GM12878 (cell line): ENCODE measurements at regions of chr11 and their contacts with region 1.

Region 1: DNA sequence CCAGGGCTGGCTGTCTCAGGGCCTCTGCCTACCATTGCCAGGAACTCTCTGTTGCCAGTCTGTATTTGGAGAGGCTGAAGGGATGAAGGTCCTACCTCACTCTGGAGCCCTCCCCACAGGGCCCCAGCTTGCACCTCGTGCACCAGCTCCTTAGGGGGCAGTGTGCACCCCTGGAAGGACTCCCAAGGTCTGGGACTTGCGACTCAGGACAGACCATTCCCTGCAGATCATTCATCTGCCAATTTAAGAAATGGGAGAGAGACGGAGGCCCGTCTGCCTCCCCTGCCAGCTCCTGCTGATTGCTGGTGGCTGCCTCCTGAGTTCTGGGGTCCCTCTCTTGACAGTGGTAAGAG is 27.5 kb upstream of the MALAT1 start:
- DNase-seq: no peak
- ATAC-seq: peak; percentile 65
- H3K4me3 ChIP-seq: 0 out of 2 replicates have a peak overlapping the region, but pooled peaks have one; percentile 31
- H3K27ac ChIP-seq: peak overlapping the region; percentile 76
- H3K4me1 ChIP-seq: peaks cover 28% of the 10 kb centered on the region
- H3K27me3 ChIP-seq: no peaks in the 10 kb centered on the region
- CTCF ChIP-seq: peak; percentile 67 to 76 (median 75)
- EP300 ChIP-seq: no peak
- POLR2A ChIP-seq: no peak
- RAD21 ChIP-seq: peak; percentile 65

Region 2: GRCh38 chr11:65366340-65366773 is 105.0 kb before region 1 on chr11:
- CTCF ChIA-PET with region 1: interaction called, 17 read pairs
- POLR2A ChIA-PET with region 1: no interaction called
- RAD21 ChIA-PET with region 1: interaction called, 5 read pairs
- SMC1A ChIA-PET with region 1: interaction called, 8 read pairs
- in situ Hi-C with region 1: no loop called
- intact Hi-C with region 1: no loop called
- DNase-seq: no peak
- ATAC-seq: peak; percentile 42
- H3K4me3 ChIP-seq: no peak overlapping the region
- H3K27ac ChIP-seq: no peak overlapping the region
- H3K4me1 ChIP-seq: peaks cover 16% of the 10 kb centered on the region
- H3K27me3 ChIP-seq: no peaks in the 10 kb centered on the region; a peak in 1 of 4 replicates
- CTCF ChIP-seq: peak; percentile 74 to 79 (median 76)
- EP300 ChIP-seq: no peak
- POLR2A ChIP-seq: no peak
- RAD21 ChIP-seq: peak; percentile 94

Region 3: GRCh38 chr11:65440831-65441499 is 30.4 kb before region 1 on chr11:
- CTCF ChIA-PET with region 1: interaction called, 13 read pairs
- POLR2A ChIA-PET with region 1: interaction called, 7 read pairs
- RAD21 ChIA-PET with region 1: interaction called, 6 read pairs
- SMC1A ChIA-PET with region 1: interaction called, 8 read pairs
- in situ Hi-C with region 1: no loop called
- intact Hi-C with region 1: no loop called
- DNase-seq: peak; percentile 98
- ATAC-seq: peak; percentile 69
- H3K4me3 ChIP-seq: no peak overlapping the region
- H3K27ac ChIP-seq: peak overlapping the region; percentile 89
- H3K4me1 ChIP-seq: peaks cover 52% of the 10 kb centered on the region
- H3K27me3 ChIP-seq: no peaks in the 10 kb centered on the region
- CTCF ChIP-seq: no peak
- EP300 ChIP-seq: peak; percentile 81 to 84; a peak in 3 of 4 replicates
- POLR2A ChIP-seq: peak; percentile 47; the same call in 1 of the 2 replicates
- RAD21 ChIP-seq: no peak

Region 4: GRCh38 chr11:65487413-65488272 is 16.3 kb after region 1 on chr11:
- CTCF ChIA-PET with region 1: interaction called, 728 read pairs
- POLR2A ChIA-PET with region 1: interaction called, 429 read pairs
- RAD21 ChIA-PET with region 1: interaction called, 208 read pairs
- SMC1A ChIA-PET with region 1: interaction called, 123 read pairs
- in situ Hi-C with region 1: no loop called
- intact Hi-C with region 1: no loop called
- DNase-seq: no peak
- ATAC-seq: peak; percentile 79
- H3K4me3 ChIP-seq: peak overlapping the region; percentile 15; the same call in 1 of the 2 replicates
- H3K27ac ChIP-seq: peak overlapping the region; percentile 62
- H3K4me1 ChIP-seq: peaks cover 61% of the 10 kb centered on the region
- H3K27me3 ChIP-seq: no peaks in the 10 kb centered on the region
- CTCF ChIP-seq: peak in 1 of 3 experiments; percentile 12; a peak in 2 of 6 replicates
- EP300 ChIP-seq: peak in 1 of 2 experiments; percentile 61; a peak in 1 of 4 replicates
- POLR2A ChIP-seq: peak; percentile 48; the same call in 1 of the 2 replicates
- RAD21 ChIP-seq: no peak

Region 5: GRCh38 chr11:65506770-65507505 is 35.6 kb after region 1 on chr11:
- CTCF ChIA-PET with region 1: interaction called, 728 read pairs
- POLR2A ChIA-PET with region 1: interaction called, 112 read pairs
- RAD21 ChIA-PET with region 1: interaction called, 208 read pairs
- SMC1A ChIA-PET with region 1: interaction called, 481 read pairs
- in situ Hi-C with region 1: no loop called
- intact Hi-C with region 1: loop called (anchors 2 kb)
- DNase-seq: no peak
- ATAC-seq: peak; percentile 61
- H3K4me3 ChIP-seq: no peak overlapping the region
- H3K27ac ChIP-seq: peak overlapping the region; percentile 28
- H3K4me1 ChIP-seq: peaks cover 10% of the 10 kb centered on the region; the same call in 1 of the 2 replicates
- H3K27me3 ChIP-seq: no peaks in the 10 kb centered on the region
- CTCF ChIP-seq: no peak
- EP300 ChIP-seq: peak in 1 of 2 experiments; percentile 31; a peak in 1 of 4 replicates
- POLR2A ChIP-seq: peak; percentile 79
- RAD21 ChIP-seq: no peak